ENCODE measurements at regions of chr6 and their contacts with region 1.

Region 1: GRCh38 chr6:117602151-117602898 is at the start of gene GOPC:
- DNase-seq: peak; percentile 99
- total RNA-seq, gene GOPC: 19.8 to 20.5 TPM

Region 2: GRCh38 chr6:117346142-117346930 is 256.0 kb before region 1 on chr6:
- intact Hi-C with region 1: loop called in 1 of 2 experiments (anchors 10 kb)
- DNase-seq: no peak

Region 3: GRCh38 chr6:117637770-117638169 is 35.4 kb after region 1 on chr6:
- intact Hi-C with region 1: no loop called
- DNase-seq: no peak